Upper lobe of right lung (tissue), 1 donor: ENCODE measurements at regions of chr14 and their contacts with region 1.

Region 1: DNA sequence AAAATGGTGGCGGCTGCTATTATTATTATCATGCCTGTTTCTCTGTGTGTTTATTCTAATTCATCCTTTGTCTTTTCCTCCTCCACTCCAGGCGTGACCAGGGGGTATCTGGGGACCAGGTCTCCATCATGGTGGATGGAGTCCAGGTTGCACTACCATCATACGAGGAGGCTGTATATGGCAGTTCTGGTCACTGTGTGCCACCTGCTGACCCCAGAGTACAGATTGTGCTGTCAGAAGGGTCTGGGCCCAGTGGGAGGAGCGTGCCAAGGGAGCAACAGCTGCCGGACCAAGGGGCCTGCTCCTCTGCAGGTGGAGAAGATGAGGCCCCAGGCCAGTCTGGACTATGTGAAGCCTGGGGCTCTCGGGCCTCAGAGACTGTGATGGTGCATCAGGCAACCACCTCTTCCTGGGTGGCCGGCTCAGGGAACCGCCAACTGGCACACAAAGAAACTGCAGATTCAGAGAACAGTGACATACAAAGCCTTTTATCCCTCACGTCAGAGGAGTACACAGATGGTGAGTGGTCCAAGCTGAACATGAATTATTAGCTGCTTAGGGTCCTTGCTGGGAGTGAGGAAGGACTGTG is 58.3 kb upstream of the SRSF5 start:
- DNase-seq: no peak
- ATAC-seq: no peak
- H3K4me3 ChIP-seq: no peak overlapping the region
- H3K27ac ChIP-seq: no peak overlapping the region
- H3K4me1 ChIP-seq: peaks cover 52% of the 10 kb centered on the region
- H3K27me3 ChIP-seq: no peaks in the 10 kb centered on the region
- CTCF ChIP-seq: peak; percentile 21

Region 2: DNA sequence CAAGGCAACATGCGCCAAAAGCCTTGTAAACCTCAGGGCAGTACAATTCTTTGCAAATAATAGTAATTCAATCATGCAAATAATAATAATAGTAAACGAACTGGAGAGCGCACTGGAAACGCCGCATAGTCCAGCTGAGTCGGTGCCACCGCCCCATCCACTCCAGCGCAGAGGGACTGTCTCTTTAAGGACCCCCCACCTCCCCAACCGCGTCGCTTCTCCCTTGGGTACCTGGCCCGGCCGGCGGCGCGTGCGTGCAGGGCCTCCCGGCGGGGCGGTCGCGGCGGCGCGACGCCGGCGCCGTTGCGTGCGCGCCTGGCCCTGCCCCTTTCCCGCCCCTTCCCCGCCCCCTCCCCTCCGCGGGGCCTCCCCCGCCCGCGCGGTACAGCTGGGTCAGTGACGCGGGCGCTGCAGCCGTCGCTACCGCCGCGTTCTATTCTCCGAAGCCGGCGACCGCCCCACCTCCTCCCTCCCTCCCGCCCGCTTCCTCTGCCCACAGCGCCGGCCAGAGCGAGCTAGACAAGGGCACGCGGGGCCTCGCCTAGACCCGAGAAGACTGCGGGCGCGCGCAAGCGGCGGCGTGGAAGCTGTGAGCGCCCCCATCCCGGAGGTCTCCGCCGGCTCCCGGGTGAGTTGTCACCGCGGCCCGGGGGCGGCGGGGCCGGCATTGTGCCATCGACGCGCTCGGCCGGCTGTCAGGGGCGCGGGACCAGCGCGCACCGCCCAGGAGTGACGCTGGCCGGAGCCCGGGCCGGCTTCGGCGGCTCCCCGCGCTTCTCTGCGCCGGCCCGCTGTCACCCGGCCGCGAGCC is 97.3 kb before region 1 on chr14 and contains the start of gene SUSD6:
- intact Hi-C with region 1: loop called (anchors 10 kb)
- DNase-seq: peak; percentile 96
- ATAC-seq: peak; percentile 92
- H3K4me3 ChIP-seq: peak within 1 kb of the TSS; percentile 81
- H3K27ac ChIP-seq: peak within 1 kb of the TSS; percentile 94
- H3K4me1 ChIP-seq: peaks cover 47% of the 10 kb centered on the region
- H3K27me3 ChIP-seq: no peaks in the 10 kb centered on the region
- CTCF ChIP-seq: no peak
- total RNA-seq, gene SUSD6: 87.5 TPM

Region 3: GRCh38 chr14:69625299-69626131 is 83.2 kb before region 1 on chr14:
- intact Hi-C with region 1: no loop called
- DNase-seq: peak; percentile 83
- ATAC-seq: peak; percentile 96
- H3K4me3 ChIP-seq: no peak overlapping the region
- H3K27ac ChIP-seq: peak overlapping the region; percentile 20
- H3K4me1 ChIP-seq: peaks cover 75% of the 10 kb centered on the region
- H3K27me3 ChIP-seq: no peaks in the 10 kb centered on the region
- CTCF ChIP-seq: no peak

Region 4: DNA sequence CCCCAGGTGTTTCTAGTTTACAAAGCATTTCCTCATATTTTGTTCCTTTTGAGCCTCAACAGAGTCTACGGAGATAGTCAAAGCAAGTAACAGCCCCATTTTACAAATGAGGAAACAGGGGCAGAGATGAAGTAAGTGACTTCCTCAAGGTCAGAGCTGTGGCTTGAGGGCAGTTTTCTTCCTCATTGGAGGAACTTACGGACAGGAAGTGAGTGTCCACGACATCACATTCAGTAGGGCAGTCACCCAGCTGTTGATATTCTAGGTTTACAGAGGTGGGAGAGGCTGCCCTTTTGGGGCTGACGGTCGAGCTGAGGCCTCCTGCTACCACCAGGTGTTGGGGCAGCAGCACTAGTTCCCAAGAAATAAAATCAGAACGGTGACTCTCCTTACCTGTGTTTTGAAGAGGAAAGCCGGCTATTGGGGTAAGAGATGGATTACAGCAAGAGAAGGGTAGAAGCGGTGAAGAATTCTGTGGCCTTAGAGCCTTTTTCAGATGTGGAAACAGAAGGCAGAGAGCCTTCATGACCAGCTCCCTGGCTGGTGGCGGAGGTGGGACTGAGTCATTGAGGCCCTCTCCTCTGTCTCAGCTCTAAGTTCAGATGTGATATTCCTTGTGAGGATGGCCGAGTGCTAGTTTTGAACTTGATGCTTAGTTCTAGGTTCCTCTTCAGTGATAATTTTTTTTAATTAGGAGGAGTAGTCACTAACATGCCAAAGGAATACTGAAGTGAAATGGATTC is 55.6 kb before region 1 on chr14:
- intact Hi-C with region 1: no loop called
- DNase-seq: no peak
- ATAC-seq: peak; percentile 78
- H3K4me3 ChIP-seq: no peak overlapping the region
- H3K27ac ChIP-seq: peak overlapping the region; percentile 63
- H3K4me1 ChIP-seq: peaks cover 96% of the 10 kb centered on the region
- H3K27me3 ChIP-seq: no peaks in the 10 kb centered on the region
- CTCF ChIP-seq: no peak